ENCODE measurements at regions of chr1 and their contacts with region 1.

Region 1: GRCh38 chr1:54944610-54945544 is 35.6 kb upstream of the TMEM61 start:
- DNase-seq: peak; percentile 54 to 78
- H3K4me3 ChIP-seq: no peak overlapping the region
- H3K27ac ChIP-seq: no peak overlapping the region
- H3K4me1 ChIP-seq: no peaks in the 10 kb centered on the region
- H3K27me3 ChIP-seq: no peaks in the 10 kb centered on the region
- CTCF ChIP-seq: peak; percentile 62 to 92 (median 83)
- EP300 ChIP-seq: no peak
- POLR2A ChIP-seq: no peak
- RAD21 ChIP-seq: peak; percentile 86 to 93

Region 2: DNA sequence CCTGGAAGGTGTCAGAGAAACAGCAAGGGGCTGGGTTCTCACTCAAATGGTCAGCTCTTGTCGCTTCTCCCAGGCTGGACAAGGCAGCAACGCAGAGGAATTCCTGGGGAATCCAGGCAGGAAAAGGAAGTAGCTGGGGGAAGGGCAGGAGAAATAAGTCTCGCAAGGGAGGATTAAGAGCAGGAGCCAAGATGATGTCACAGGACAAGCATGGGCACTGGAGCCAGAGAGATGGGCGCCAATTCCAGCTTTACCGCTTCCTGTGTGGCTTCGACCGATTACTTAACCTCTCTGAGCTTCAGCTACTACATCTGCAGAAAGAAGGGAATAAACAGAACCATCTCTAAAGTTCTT is 609.1 kb before region 1 on chr1:
- CTCF ChIA-PET with region 1: no interaction called
- POLR2A ChIA-PET with region 1: no interaction called
- DNase-seq: no peak
- H3K4me3 ChIP-seq: no peak overlapping the region
- H3K27ac ChIP-seq: no peak overlapping the region
- H3K4me1 ChIP-seq: peaks cover 20 to 37% (median 30%) of the 10 kb centered on the region in 4 experiments
- H3K27me3 ChIP-seq: no peaks in the 10 kb centered on the region
- CTCF ChIP-seq: no peak
- EP300 ChIP-seq: no peak
- POLR2A ChIP-seq: no peak
- RAD21 ChIP-seq: no peak

Region 3: DNA sequence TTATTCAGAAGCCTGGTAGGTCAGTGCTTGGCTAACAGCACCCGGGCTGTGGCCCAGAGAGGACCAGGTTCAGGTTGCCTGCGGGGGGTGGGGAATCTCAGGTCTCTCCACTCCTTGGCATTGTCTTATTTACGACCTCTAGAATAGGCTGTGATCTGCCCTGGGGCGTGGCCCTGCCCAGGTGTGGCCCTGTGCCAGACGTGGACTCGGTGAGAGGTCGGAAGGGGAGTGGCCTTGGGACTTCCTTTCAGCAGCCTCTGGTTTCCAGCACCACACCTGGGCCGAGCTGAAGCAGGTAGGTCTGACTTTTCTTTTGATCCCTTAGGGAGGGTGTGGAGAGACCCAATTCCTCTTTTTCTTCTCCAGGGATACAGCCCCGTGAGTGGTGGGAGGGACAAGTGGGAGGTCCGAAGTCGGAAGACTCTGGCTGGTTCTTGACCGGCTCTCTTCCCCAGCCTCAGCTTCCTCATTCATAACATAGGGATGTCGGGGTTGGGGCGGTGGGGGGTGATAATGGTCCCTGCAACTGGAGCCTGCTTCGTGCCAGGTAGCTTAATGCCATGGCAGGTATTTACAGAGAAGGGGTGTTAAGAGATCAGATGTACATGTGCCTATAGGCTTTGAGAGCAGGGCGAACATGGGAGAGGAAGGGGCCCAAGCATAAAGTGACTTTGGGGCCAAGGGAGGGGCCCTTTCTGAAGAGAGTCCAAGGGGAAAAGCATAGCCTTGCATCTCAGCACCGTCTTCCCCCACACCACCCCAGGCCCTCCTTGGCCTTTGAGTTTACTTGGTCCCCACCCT is 380.4 kb before region 1 on chr1:
- CTCF ChIA-PET with region 1: no interaction called
- POLR2A ChIA-PET with region 1: no interaction called
- DNase-seq: no peak
- H3K4me3 ChIP-seq: no peak overlapping the region
- H3K27ac ChIP-seq: no peak overlapping the region
- H3K4me1 ChIP-seq: peaks cover 3 to 11% (median 3%) of the 10 kb centered on the region in 4 experiments
- H3K27me3 ChIP-seq: no peaks in the 10 kb centered on the region; a peak in 1 of 7 replicates
- CTCF ChIP-seq: no peak
- EP300 ChIP-seq: no peak
- POLR2A ChIP-seq: no peak
- RAD21 ChIP-seq: no peak

Region 4: DNA sequence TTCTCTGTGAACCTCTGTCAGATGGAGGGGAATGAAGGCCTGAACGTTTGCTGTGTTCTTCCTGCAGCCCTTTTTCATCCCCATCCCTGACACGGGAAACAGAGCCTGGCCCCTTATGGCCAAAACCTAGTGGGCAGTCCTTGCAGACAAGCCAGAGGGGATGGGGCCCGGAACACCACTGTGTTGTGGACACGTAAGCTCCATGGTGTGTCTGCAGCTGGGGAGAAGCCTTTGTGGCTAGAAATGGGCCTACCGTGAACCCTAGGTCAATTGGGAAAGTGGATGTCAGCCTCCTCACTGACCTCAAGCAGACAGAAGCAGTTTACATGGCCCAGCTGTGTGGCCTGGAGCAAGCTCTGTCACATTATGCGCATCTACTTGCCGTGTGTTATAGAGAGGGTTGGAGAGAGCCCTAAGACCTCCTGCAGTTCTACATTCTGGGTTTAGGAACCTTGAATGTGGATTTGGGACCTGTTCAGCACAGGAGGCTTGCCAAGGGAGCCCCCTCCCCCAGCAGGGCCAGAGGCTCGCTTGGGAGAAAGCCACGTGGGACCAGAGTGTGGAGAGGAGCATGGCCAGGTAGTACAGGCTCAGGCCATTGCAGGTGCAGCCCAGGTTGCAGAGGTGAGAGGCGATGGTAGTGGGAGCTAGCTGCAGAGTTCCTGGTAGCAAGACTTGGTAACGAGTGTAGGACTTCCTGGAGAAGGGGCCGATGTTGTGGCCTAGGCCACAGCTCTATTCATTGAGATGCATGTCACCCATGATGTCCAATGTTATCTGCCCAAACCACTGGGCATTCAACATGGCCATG is 201.3 kb before region 1 on chr1:
- CTCF ChIA-PET with region 1: no interaction called
- POLR2A ChIA-PET with region 1: no interaction called
- DNase-seq: no peak
- H3K4me3 ChIP-seq: no peak overlapping the region
- H3K27ac ChIP-seq: no peak overlapping the region
- H3K4me1 ChIP-seq: no peaks in the 10 kb centered on the region
- H3K27me3 ChIP-seq: no peaks in the 10 kb centered on the region
- CTCF ChIP-seq: no peak
- EP300 ChIP-seq: no peak
- POLR2A ChIP-seq: no peak
- RAD21 ChIP-seq: no peak

Region 5: GRCh38 chr1:54872036-54872331 is 72.9 kb before region 1 on chr1:
- CTCF ChIA-PET with region 1: interaction called, 15 read pairs
- POLR2A ChIA-PET with region 1: no interaction called
- DNase-seq: no peak
- H3K4me3 ChIP-seq: no peak overlapping the region
- H3K27ac ChIP-seq: no peak overlapping the region
- H3K4me1 ChIP-seq: peaks cover 0 to 3% (median 0%) of the 10 kb centered on the region in 4 experiments; a peak in 1 of 7 replicates
- H3K27me3 ChIP-seq: no peaks in the 10 kb centered on the region
- CTCF ChIP-seq: peak; percentile 6 to 30 (median 8)
- EP300 ChIP-seq: no peak
- POLR2A ChIP-seq: no peak
- RAD21 ChIP-seq: peak; percentile 20 to 33; a peak in 1 of 4 replicates

Region 6: GRCh38 chr1:54931275-54931840 is 13.5 kb before region 1 on chr1:
- CTCF ChIA-PET with region 1: interaction called, 10 read pairs
- POLR2A ChIA-PET with region 1: interaction called, 3 read pairs
- DNase-seq: no peak
- H3K4me3 ChIP-seq: no peak overlapping the region
- H3K27ac ChIP-seq: no peak overlapping the region
- H3K4me1 ChIP-seq: no peaks in the 10 kb centered on the region
- H3K27me3 ChIP-seq: no peaks in the 10 kb centered on the region
- CTCF ChIP-seq: no peak
- EP300 ChIP-seq: no peak
- POLR2A ChIP-seq: no peak
- RAD21 ChIP-seq: no peak

Region 7: DNA sequence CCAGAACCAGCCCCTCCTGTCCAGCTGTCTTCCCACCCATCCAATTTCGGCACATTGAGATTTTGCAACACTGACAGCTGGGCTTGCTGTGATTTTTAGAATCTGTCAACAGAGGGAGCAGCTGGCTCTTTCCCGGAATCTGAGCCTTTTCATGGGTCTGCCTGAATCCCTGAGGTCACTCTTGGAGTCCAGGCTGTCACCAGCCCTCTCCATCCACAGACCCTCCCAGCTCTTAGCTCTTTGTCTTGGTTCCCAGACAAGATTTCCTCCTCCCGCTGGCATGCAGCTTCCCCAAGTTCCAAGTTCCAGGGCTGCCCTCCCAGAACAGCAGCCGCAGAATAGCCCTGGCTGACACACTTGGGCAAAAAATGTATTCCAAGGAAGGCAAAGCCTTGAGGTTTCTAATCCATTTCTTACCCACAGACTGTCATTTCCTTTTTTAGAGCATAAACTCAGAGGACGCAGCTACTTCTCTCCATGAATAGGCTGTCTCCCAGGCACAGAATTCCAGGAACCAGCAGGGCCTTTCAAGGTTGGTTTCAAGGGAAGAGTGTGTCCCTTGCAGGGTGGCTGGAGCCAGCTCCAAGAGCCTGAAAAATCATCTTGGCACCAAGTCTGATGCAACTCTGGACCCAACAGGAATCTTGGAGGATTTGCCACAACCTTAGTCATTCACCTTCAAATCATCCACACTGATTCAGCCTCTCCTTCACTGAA is 28.5 kb after region 1 on chr1:
- CTCF ChIA-PET with region 1: interaction called, 436 read pairs
- POLR2A ChIA-PET with region 1: interaction called, 3 read pairs
- DNase-seq: no peak
- H3K4me3 ChIP-seq: no peak overlapping the region
- H3K27ac ChIP-seq: no peak overlapping the region
- H3K4me1 ChIP-seq: peaks cover 0 to 4% (median under 1%) of the 10 kb centered on the region in 4 experiments; a peak in 4 of 7 replicates
- H3K27me3 ChIP-seq: no peaks in the 10 kb centered on the region
- CTCF ChIP-seq: peak; percentile 18 to 63 (median 50)
- EP300 ChIP-seq: no peak
- POLR2A ChIP-seq: no peak
- RAD21 ChIP-seq: peak; percentile 45 to 53; a peak in 3 of 4 replicates

Region 8: DNA sequence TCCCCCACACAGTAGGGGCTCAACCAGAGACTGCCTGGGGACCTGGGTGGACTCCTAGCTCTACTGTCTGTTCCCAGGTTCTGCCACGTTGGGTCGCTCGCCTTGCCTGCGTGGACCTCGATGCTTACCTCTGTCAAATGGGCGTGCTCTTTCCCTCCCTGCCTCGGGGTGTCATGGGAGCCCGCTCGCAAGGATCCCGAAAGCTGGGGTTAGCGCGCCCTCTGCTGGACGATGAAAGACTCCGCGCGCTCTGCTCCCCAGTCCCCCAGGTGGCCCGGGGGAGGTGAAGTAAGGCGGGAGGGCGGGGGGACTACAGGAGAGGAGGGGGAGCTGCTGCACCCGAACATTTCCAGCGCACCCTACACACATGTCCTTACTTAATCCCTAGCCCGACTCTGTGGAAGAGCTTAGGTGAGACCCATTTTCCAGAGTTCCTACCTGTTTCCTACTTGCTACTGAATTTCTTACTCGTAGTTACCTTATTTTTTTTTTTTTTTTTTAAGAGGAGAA is 51.5 kb after region 1 on chr1:
- CTCF ChIA-PET with region 1: interaction called, 511 read pairs
- POLR2A ChIA-PET with region 1: interaction called, 13 read pairs
- DNase-seq: peak; percentile 61 to 96
- H3K4me3 ChIP-seq: peak overlapping the region; percentile 12 to 65 (median 50); a peak in 7 of 8 replicates
- H3K27ac ChIP-seq: no peak overlapping the region
- H3K4me1 ChIP-seq: peaks cover 16 to 30% (median 23%) of the 10 kb centered on the region in 4 experiments
- H3K27me3 ChIP-seq: peaks cover 4 to 45% (median 38%) of the 10 kb centered on the region in 4 experiments
- CTCF ChIP-seq: peak; percentile 78 to 95 (median 82)
- EP300 ChIP-seq: no peak
- POLR2A ChIP-seq: no peak
- RAD21 ChIP-seq: peak; percentile 95 to 98

Region 9: GRCh38 chr1:55021965-55022546 is 77.2 kb after region 1 on chr1:
- CTCF ChIA-PET with region 1: interaction called, 343 read pairs
- POLR2A ChIA-PET with region 1: no interaction called
- DNase-seq: peak; percentile 95 to 98
- H3K4me3 ChIP-seq: no peak overlapping the region
- H3K27ac ChIP-seq: no peak overlapping the region
- H3K4me1 ChIP-seq: no peaks in the 10 kb centered on the region; a peak in 2 of 7 replicates
- H3K27me3 ChIP-seq: no peaks in the 10 kb centered on the region
- CTCF ChIP-seq: peak; percentile 83 to 99 (median 98)
- EP300 ChIP-seq: no peak
- POLR2A ChIP-seq: peak in 1 of 2 experiments; percentile 32; a peak in 1 of 3 replicates
- RAD21 ChIP-seq: peak; percentile 93

Measured in H1 (cell line).